Calu3 (cell line): ENCODE measurements at regions of chr2 and their contacts with region 1.

Region 1: GRCh38 chr2:113756355-113757137 is at the start of gene SLC35F5:
- DNase-seq: peak; percentile 97
- H3K4me3 Mint-ChIP-seq: peak within 1 kb of the TSS; percentile 79
- H3K27ac Mint-ChIP-seq: peak within 1 kb of the TSS; percentile 91
- H3K4me1 Mint-ChIP-seq: peaks cover 8% of the 10 kb centered on the region
- H3K27me3 Mint-ChIP-seq: no peaks in the 10 kb centered on the region
- CTCF ChIP-seq: no peak
- total RNA-seq, gene SLC35F5: 95.1 and 101 TPM in 2 replicates

Region 2: DNA sequence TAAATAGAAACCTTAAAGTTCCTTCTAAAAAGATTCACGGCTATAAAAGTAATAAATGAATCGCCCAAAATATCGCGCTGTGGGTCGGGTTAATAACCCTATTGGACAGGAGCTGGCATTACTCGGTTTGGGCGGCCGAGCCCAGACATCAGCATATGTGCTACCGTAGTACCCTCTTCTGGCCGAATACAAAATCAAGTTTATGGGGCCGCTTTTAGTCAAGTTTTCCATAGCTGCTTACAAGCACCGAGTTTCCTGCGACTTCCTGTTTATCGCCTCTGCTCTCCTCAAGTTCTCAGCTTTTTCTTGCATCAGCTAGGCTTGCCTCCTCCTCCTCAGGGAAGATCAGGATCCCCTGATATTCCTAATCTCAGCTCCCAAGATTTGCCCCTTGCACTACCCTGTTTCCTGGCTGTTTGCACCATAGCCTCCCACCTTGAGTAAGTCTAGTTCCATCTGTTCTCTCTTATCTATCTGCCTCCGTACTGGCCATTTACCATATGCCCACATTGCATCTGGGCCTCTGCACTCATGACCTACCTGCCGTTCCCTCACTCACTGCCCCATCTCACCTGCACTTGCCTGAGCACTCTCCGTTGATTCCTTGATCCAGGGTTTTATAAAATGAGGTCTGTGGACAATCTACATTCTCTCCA is 56.2 kb before region 1 on chr2:
- CTCF ChIA-PET with region 1: no interaction called
- intact Hi-C with region 1: no loop called
- DNase-seq: no peak
- H3K4me3 Mint-ChIP-seq: no peak overlapping the region
- H3K27ac Mint-ChIP-seq: no peak overlapping the region
- H3K4me1 Mint-ChIP-seq: no peaks in the 10 kb centered on the region
- H3K27me3 Mint-ChIP-seq: no peaks in the 10 kb centered on the region
- CTCF ChIP-seq: no peak

Region 3: GRCh38 chr2:113791697-113792590 is 35.4 kb after region 1 on chr2:
- CTCF ChIA-PET with region 1: no interaction called
- intact Hi-C with region 1: loop called (anchors 5 kb)
- DNase-seq: no peak
- H3K4me3 Mint-ChIP-seq: no peak overlapping the region
- H3K27ac Mint-ChIP-seq: peak overlapping the region; percentile 90
- H3K4me1 Mint-ChIP-seq: peaks cover 38% of the 10 kb centered on the region
- H3K27me3 Mint-ChIP-seq: no peaks in the 10 kb centered on the region
- CTCF ChIP-seq: no peak

Region 4: DNA sequence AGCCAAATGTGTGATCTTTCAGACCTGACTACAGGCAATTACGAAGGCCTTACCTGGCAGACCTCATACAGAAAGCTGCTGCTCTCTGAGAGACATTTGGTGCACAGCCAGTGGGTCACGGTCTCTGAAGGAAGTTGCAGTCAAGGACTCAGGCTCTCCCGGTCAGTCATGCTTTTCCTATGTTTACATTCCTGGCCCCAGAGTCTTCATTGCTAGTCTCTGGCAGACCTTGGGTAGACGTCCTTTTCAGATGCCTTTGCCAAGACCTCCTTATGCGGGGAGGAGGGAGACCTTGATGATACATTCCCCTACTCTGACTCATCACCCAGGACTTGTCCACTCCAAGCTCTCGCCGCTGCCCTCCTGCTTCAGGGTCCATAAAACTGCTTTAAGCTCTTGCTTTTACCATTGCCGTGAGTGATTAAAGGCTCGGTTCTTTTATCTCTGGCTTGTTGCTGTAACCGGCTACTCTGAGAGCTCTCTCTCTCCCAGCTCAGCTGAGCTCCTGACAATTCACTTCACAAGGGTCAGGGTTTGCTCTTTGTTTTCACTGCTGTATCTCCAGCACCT is 61.9 kb after region 1 on chr2:
- CTCF ChIA-PET with region 1: no interaction called
- intact Hi-C with region 1: loop called (anchors 10 kb)
- DNase-seq: peak; percentile 50
- H3K4me3 Mint-ChIP-seq: peak overlapping the region; percentile 40
- H3K27ac Mint-ChIP-seq: no peak overlapping the region
- H3K4me1 Mint-ChIP-seq: peaks cover 17% of the 10 kb centered on the region
- H3K27me3 Mint-ChIP-seq: no peaks in the 10 kb centered on the region
- CTCF ChIP-seq: no peak

Region 5: GRCh38 chr2:113876503-113877387 is 120.2 kb after region 1 on chr2:
- CTCF ChIA-PET with region 1: no interaction called
- intact Hi-C with region 1: no loop called
- DNase-seq: peak; percentile 95
- H3K4me3 Mint-ChIP-seq: peak overlapping the region; percentile 56
- H3K27ac Mint-ChIP-seq: peak overlapping the region; percentile 91
- H3K4me1 Mint-ChIP-seq: peaks cover 45% of the 10 kb centered on the region
- H3K27me3 Mint-ChIP-seq: peaks cover 12% of the 10 kb centered on the region
- CTCF ChIP-seq: no peak

Region 6: GRCh38 chr2:113889471-113890252 is 133.1 kb after region 1 on chr2 and contains the start of gene ACTR3:
- CTCF ChIA-PET with region 1: interaction called, 5 read pairs
- intact Hi-C with region 1: loop called (anchors 2 kb)
- DNase-seq: peak; percentile 98
- H3K4me3 Mint-ChIP-seq: peak within 1 kb of the TSS; percentile 90
- H3K27ac Mint-ChIP-seq: peak within 1 kb of the TSS; percentile 98
- H3K4me1 Mint-ChIP-seq: peaks cover 68% of the 10 kb centered on the region
- H3K27me3 Mint-ChIP-seq: no peaks in the 10 kb centered on the region
- CTCF ChIP-seq: no peak
- total RNA-seq, gene ACTR3: 277 and 296 TPM in 2 replicates

Region 7: DNA sequence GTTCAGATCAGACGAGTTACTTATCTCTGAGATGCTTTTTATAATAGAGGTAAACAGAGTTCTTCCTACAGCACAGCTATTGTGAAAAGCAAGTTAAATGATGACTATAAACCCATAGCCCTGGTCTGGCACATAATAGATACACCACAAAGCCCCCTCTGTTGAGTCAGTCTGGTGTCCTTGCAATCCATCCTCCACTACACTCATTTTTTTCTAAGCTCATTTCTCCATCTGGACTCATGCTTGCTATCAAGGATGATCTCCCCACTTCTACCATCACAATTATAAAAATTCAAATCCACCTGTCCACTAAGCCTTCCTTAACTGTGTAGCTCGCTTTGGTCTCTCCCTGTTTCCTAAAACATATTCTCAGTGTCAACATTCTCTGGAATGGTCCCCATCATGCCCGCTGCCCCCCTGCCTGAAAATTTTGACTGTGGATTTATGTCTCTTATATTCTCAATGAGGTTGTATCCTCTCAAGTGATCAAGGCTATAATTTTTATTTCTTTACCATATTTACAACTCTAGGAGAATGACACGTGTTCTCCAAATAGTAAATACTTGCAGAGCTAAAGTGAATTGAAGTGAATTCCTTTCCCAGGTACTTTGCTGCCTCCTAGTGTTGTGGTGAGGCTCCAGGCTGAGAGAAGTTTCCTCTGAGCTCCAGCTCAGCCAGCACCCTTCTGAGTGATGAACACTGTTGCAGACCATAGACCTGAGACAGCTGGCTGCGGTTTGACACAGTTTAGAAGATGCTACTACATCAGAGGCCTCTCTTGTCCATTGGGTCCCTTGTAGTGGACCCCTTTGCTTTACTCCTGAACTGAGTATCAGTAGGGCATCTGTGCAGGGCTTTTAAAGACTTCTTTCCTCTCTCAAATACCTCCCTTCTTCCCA is 794.6 kb after region 1 on chr2:
- CTCF ChIA-PET with region 1: no interaction called
- intact Hi-C with region 1: loop called (anchors 10 kb)
- DNase-seq: peak; percentile 71
- H3K4me3 Mint-ChIP-seq: no peak overlapping the region
- H3K27ac Mint-ChIP-seq: peak overlapping the region; percentile 12
- H3K4me1 Mint-ChIP-seq: peaks cover 44% of the 10 kb centered on the region
- H3K27me3 Mint-ChIP-seq: peaks cover 22% of the 10 kb centered on the region
- CTCF ChIP-seq: peak; percentile 78